CD8-positive, alpha-beta memory T cell (primary cell): ENCODE measurements at regions of chr6 and their contacts with region 1.

Region 1: GRCh38 chr6:42043787-42044475 is 6.4 kb upstream of the TAF8 start:
- DNase-seq: peak; percentile 83 to 92 (median 88)
- H3K4me3 ChIP-seq: peak overlapping the region; percentile 63
- H3K4me3 Mint-ChIP-seq: peak overlapping the region; percentile 78 to 98 (median 89)
- H3K27ac ChIP-seq: no peak overlapping the region
- H3K27ac Mint-ChIP-seq: peak overlapping the region; percentile 67 to 97 (median 88)
- H3K4me1 ChIP-seq: peaks cover 80% of the 10 kb centered on the region
- H3K4me1 Mint-ChIP-seq: peaks cover 71 to 92% (median 82%) of the 10 kb centered on the region in 3 donors
- H3K27me3 ChIP-seq: no peaks in the 10 kb centered on the region
- H3K27me3 Mint-ChIP-seq: peaks cover 0 to 2% of the 10 kb centered on the region in 2 donors

Region 2: GRCh38 chr6:41824571-41825569 is 219.1 kb before region 1 on chr6:
- CTCF ChIA-PET with region 1: no interaction called
- POLR2A ChIA-PET with region 1: no interaction called
- DNase-seq: no peak
- H3K4me3 ChIP-seq: no peak overlapping the region
- H3K4me3 Mint-ChIP-seq: no peak overlapping the region
- H3K27ac ChIP-seq: no peak overlapping the region
- H3K27ac Mint-ChIP-seq: no peak overlapping the region
- H3K4me1 ChIP-seq: no peaks in the 10 kb centered on the region
- H3K4me1 Mint-ChIP-seq: no peaks in the 10 kb centered on the region
- H3K27me3 ChIP-seq: no peaks in the 10 kb centered on the region
- H3K27me3 Mint-ChIP-seq: no peaks in the 10 kb centered on the region

Region 3: DNA sequence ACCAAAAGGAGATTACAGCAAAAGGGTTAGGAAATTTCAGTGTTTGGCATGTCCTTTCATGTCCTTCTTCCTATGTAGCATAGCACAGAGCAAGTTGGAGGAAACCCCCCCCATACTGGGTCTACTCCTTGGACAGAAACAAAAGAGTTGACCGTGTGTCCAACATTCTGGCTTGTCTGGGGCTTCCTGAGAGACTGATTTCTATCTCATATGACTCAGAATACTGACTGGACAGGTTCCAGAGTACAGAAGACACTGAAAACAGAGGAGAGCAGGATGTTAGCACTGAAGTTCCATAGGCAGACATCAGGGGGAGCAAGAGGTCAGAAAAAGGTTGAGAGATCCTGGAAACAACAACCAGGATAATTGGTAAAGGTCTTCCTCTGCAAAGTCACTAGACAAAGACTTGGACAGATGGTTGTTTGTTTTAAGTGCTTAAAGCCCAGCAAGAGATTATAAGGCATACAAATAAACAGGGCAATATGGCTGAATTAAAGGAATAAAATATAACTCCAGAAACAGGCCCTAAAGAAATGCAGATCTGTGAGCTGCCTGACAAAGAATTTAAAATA is 197.2 kb before region 1 on chr6:
- CTCF ChIA-PET with region 1: interaction called, 20 read pairs
- POLR2A ChIA-PET with region 1: no interaction called
- DNase-seq: peak; percentile 10 to 53 (median 38)
- H3K4me3 ChIP-seq: no peak overlapping the region
- H3K4me3 Mint-ChIP-seq: no peak overlapping the region
- H3K27ac ChIP-seq: peak overlapping the region; percentile 19
- H3K27ac Mint-ChIP-seq: no peak overlapping the region
- H3K4me1 ChIP-seq: no peaks in the 10 kb centered on the region
- H3K4me1 Mint-ChIP-seq: peaks cover 6% of the 10 kb centered on the region in 3 donors
- H3K27me3 ChIP-seq: no peaks in the 10 kb centered on the region
- H3K27me3 Mint-ChIP-seq: no peaks in the 10 kb centered on the region

Region 4: GRCh38 chr6:41878246-41878645 is 165.7 kb before region 1 on chr6:
- CTCF ChIA-PET with region 1: no interaction called
- POLR2A ChIA-PET with region 1: no interaction called
- DNase-seq: no peak
- H3K4me3 ChIP-seq: no peak overlapping the region
- H3K4me3 Mint-ChIP-seq: no peak overlapping the region
- H3K27ac ChIP-seq: no peak overlapping the region
- H3K27ac Mint-ChIP-seq: no peak overlapping the region
- H3K4me1 ChIP-seq: no peaks in the 10 kb centered on the region
- H3K4me1 Mint-ChIP-seq: no peaks in the 10 kb centered on the region
- H3K27me3 ChIP-seq: no peaks in the 10 kb centered on the region
- H3K27me3 Mint-ChIP-seq: no peaks in the 10 kb centered on the region

Region 5: GRCh38 chr6:41895300-41896233 is 148.4 kb before region 1 on chr6 and contains the start of gene USP49:
- CTCF ChIA-PET with region 1: interaction called, 11 read pairs
- POLR2A ChIA-PET with region 1: no interaction called
- DNase-seq: peak; percentile 85 to 95 (median 89)
- H3K4me3 ChIP-seq: peak within 1 kb of the TSS; percentile 71
- H3K4me3 Mint-ChIP-seq: no peak within 1 kb of the TSS
- H3K27ac ChIP-seq: peak within 1 kb of the TSS; percentile 58
- H3K27ac Mint-ChIP-seq: peak within 1 kb of the TSS; percentile 57 to 98 (median 93)
- H3K4me1 ChIP-seq: peaks cover 24% of the 10 kb centered on the region
- H3K4me1 Mint-ChIP-seq: peaks cover 9 to 13% (median 11%) of the 10 kb centered on the region in 3 donors
- H3K27me3 ChIP-seq: no peaks in the 10 kb centered on the region
- H3K27me3 Mint-ChIP-seq: no peaks in the 10 kb centered on the region
- total RNA-seq, gene USP49: 5.0 to 5.2 TPM